ENCODE measurements at regions of chr5 and their contacts with region 1.

Region 1: GRCh38 chr5:75734913-75735789 is 17.9 kb upstream of the POC5 start:
- DNase-seq: peak in 3 of 4 experiments; percentile 14 to 54 (median 22)
- ATAC-seq: peak; percentile 92
- H3K4me3 ChIP-seq: no peak overlapping the region
- H3K27ac ChIP-seq: no peak overlapping the region
- H3K4me1 ChIP-seq: peaks cover 0 to 4% of the 10 kb centered on the region in 2 experiments; a peak in 1 of 5 replicates
- H3K27me3 ChIP-seq: peaks cover 4 to 7% of the 10 kb centered on the region in 2 experiments; a peak in 1 of 5 replicates
- CTCF ChIP-seq: peak; percentile 63 to 67 (median 63)
- EP300 ChIP-seq: no peak
- POLR2A ChIP-seq: no peak
- RAD21 ChIP-seq: peak; percentile 51 to 66

Region 2: DNA sequence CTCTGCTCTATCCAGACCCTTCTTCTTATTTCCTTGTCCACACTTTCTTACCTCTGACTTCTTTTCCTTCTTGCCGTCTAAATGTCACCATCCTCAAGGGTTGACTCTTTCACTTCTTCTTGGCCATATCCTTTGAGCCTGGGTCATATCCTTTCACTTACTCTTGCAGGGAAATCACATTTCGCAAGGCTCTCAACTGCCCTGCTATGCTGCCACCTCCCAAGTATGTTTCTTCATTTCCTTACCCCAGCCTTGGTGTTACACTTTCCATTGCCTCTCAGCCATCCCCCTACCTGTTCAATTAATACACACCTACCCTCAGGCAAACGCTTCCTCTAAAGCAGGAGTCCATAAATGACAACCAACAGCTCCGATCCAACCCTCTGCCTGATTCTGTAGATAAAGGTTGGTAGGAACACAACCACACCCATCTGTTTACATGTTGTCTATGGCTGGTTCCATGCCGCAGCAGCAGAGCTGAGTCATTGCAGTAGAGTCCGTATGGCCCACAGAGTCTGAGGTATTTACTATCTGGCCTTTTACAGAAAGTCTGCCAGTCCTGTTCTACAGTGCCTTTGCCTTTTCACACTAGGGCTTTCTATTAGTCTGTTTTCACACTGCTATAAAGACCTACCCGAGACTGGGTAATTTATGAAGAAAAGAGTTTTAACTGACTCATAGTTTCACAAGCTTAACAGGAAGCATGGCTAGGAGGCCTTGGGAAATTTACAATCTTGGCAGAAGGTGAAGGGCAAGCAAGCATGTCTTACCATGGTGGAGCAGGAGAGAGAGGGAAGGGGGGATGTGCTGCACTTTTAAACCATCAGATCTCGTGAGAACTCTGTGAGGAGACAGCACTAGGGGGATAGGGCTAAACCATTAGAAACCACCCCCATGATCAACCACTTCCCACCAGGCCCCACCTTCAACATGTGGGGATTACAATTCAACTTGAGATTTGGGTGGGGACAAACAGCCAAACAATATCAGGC is 446.0 kb after region 1 on chr5:
- CTCF ChIA-PET with region 1: no interaction called
- POLR2A ChIA-PET with region 1: no interaction called
- in situ Hi-C with region 1: no loop called
- intact Hi-C with region 1: loop called (anchors 10 kb)
- DNase-seq: peak; percentile 55 to 73 (median 66)
- ATAC-seq: peak; percentile 92
- H3K4me3 ChIP-seq: no peak overlapping the region
- H3K27ac ChIP-seq: peak overlapping the region; percentile 71
- H3K4me1 ChIP-seq: peaks cover 15 to 38% of the 10 kb centered on the region in 2 experiments
- H3K27me3 ChIP-seq: no peaks in the 10 kb centered on the region
- CTCF ChIP-seq: no peak
- EP300 ChIP-seq: no peak
- POLR2A ChIP-seq: no peak
- RAD21 ChIP-seq: no peak